ENCODE measurements at regions of chr1 and their contacts with region 1.

Region 1: GRCh38 chr1:223358826-223359225 is 5.2 kb downstream of the SUSD4 start:
- DNase-seq: no peak
- H3K4me3 ChIP-seq: no peak overlapping the region
- H3K27ac ChIP-seq: no peak overlapping the region
- H3K4me1 ChIP-seq: no peaks in the 10 kb centered on the region
- H3K27me3 ChIP-seq: peaks cover 11% of the 10 kb centered on the region
- CTCF ChIP-seq: no peak

Region 2: DNA sequence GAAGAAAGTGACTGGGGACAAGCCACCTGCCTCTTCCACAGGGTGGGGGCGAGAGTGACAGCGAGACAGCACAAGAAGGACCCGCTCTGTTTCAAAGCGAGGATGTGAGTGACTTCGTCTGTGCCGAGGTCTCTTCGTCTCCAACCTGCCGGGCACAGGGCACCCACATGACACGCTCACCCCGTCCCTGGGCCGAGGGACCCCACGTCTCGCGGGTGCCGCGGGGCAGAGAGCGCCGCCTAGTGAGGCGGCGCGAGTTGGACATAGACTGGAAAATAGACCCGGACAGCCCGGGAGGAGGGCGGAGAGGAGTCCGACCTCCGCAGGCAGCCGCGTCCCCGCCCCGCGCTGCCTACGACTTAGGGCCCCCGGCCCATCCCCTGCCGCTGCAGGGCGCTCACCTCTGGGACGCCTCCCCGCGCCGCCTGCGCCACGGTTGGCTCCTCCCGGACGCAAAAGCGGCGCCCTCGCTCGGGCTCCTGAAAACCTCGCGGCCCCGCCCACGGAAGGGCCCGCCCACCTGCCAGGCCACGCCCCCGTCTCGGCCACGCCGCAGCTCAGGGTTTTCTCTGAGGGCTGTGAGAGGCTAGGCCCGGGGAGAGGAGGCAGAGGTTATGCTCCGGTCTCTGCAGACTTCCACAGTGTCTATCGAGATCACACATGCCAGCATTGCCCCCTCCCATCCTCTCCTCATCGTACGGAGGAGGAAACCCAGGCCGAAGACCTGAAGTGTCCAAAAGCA is 215.9 kb before region 1 on chr1 and contains the start of gene TLR5:
- intact Hi-C with region 1: loop called (anchors 10 kb)
- DNase-seq: peak; percentile 94
- H3K4me3 ChIP-seq: peak within 1 kb of the TSS; percentile 53
- H3K27ac ChIP-seq: peak within 1 kb of the TSS; percentile 50
- H3K4me1 ChIP-seq: peaks cover 8% of the 10 kb centered on the region
- H3K27me3 ChIP-seq: no peaks in the 10 kb centered on the region
- CTCF ChIP-seq: peak; percentile 47
- total RNA-seq, gene TLR5: 1.7 to 3.0 TPM